ENCODE measurements at regions of chr11 and their contacts with region 1.

Region 1: DNA sequence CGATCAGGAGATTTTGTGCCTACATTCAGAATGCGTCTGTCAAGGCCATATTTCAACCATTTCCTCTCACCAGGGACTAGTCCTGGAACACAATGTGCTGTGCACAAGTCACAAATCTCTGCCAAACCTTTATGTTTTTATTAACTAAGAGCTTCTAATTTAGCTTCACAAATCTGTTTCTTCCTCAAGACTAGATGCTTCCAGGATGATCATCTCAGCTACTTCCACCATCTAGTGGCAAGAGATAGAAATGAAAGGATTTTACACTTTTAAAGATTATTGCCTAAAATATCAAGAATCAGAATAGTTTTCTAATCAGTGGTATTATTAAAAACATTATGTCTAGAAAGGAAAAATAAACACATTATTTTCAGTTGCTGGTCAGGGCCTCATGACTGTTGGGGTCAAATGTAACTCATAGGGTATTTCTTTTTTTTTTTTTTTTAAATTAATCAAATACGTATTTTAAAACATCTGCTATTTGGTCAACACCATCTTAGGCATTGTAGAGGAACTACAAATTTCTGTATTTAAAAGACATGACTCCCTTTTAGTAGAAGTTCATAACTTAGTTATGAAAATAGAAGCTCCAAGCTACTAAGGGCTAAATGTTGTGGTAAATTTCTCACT is 1102.6 kb downstream of the DLG2 start:
- DNase-seq: peak; percentile 6
- H3K4me3 Mint-ChIP-seq: no peak overlapping the region
- H3K27ac Mint-ChIP-seq: no peak overlapping the region
- H3K4me1 Mint-ChIP-seq: no peaks in the 10 kb centered on the region
- H3K27me3 Mint-ChIP-seq: peaks cover 40% of the 10 kb centered on the region
- CTCF ChIP-seq: peak; percentile 53

Region 2: DNA sequence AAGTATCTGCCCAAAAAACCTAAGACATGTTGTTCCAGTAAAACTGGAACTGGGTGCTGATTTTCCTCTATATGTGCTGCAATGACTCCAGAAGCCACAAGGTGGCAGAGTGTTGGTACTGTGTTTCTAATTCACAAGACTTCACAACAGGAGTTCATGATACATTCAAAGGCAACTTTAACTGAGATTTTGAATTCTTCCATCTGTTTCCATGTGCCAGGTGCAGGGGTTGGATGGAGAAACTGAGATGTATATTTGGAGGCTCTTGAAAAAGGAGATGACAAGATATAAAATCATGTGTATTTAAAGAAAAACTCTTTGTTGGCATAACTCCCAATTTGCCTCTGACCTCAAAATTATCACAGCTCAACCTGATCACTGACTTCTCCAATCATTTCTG is 139.8 kb before region 1 on chr11:
- CTCF ChIA-PET with region 1: interaction called, 25 read pairs
- POLR2A ChIA-PET with region 1: no interaction called
- intact Hi-C with region 1: loop called (anchors 1 kb)
- DNase-seq: peak; percentile 50
- H3K4me3 Mint-ChIP-seq: no peak overlapping the region
- H3K27ac Mint-ChIP-seq: no peak overlapping the region
- H3K4me1 Mint-ChIP-seq: no peaks in the 10 kb centered on the region
- H3K27me3 Mint-ChIP-seq: peaks cover 14% of the 10 kb centered on the region
- CTCF ChIP-seq: peak; percentile 59